PC-3 (cell line): ENCODE measurements at regions of chr1 and their contacts with region 1.

Region 1: GRCh38 chr1:151639466-151639865 is 27.6 kb downstream of the SNX27 start:
- DNase-seq: no peak
- ATAC-seq: no peak
- H3K4me3 ChIP-seq: no peak overlapping the region
- H3K27ac ChIP-seq: no peak overlapping the region
- H3K4me1 ChIP-seq: peaks cover 8% of the 10 kb centered on the region
- H3K27me3 ChIP-seq: no peaks in the 10 kb centered on the region
- CTCF ChIP-seq: no peak

Region 2: DNA sequence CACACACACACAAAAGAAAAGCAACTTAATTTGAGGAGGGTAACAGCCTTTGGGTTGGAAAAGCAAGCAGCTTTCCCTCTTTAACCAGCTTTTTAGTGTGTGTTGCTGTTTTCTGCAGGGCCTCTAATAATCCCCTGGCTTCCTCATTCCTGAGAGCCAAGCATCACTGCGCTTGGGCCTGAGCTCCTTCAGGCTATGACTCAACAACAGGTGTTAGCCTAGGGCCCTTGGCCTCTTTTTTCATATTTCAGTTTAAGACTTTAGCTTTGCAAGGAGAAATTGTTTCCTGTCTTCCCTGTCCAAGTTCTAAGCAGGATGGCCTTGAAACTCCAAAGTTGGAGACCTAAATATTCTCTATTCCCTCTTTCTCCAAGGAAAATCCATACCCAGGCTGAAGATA is 53.8 kb before region 1 on chr1:
- CTCF ChIA-PET with region 1: no interaction called
- POLR2A ChIA-PET with region 1: interaction called, 17 read pairs
- intact Hi-C with region 1: no loop called
- DNase-seq: peak; percentile 94
- ATAC-seq: peak; percentile 99
- H3K4me3 ChIP-seq: no peak overlapping the region
- H3K27ac ChIP-seq: peak overlapping the region; percentile 23
- H3K4me1 ChIP-seq: peaks cover 19% of the 10 kb centered on the region
- H3K27me3 ChIP-seq: no peaks in the 10 kb centered on the region
- CTCF ChIP-seq: no peak

Region 3: GRCh38 chr1:151606395-151606794 is 33.1 kb before region 1 on chr1:
- CTCF ChIA-PET with region 1: no interaction called
- POLR2A ChIA-PET with region 1: interaction called, 15 read pairs
- intact Hi-C with region 1: no loop called
- DNase-seq: peak; percentile 99
- ATAC-seq: peak; percentile 65
- H3K4me3 ChIP-seq: no peak overlapping the region
- H3K27ac ChIP-seq: peak overlapping the region; percentile 43
- H3K4me1 ChIP-seq: peaks cover 33% of the 10 kb centered on the region
- H3K27me3 ChIP-seq: no peaks in the 10 kb centered on the region
- CTCF ChIP-seq: no peak

Region 4: GRCh38 chr1:151811147-151811546 is 171.7 kb after region 1 on chr1:
- CTCF ChIA-PET with region 1: no interaction called
- POLR2A ChIA-PET with region 1: no interaction called
- intact Hi-C with region 1: no loop called
- DNase-seq: no peak
- ATAC-seq: no peak
- H3K4me3 ChIP-seq: no peak overlapping the region
- H3K27ac ChIP-seq: no peak overlapping the region
- H3K4me1 ChIP-seq: no peaks in the 10 kb centered on the region
- H3K27me3 ChIP-seq: 0 out of 2 replicates have a peak, but pooled peaks cover under 1% of the 10 kb centered on the region
- CTCF ChIP-seq: no peak